ENCODE measurements at regions of chr17 and their contacts with region 1.

Region 1: GRCh38 chr17:3935140-3935542 is 18.9 kb upstream of the P2RX1 start:
- DNase-seq: peak; percentile 84 to 87
- ATAC-seq: peak; percentile 96 to 98
- H3K4me3 ChIP-seq: no peak overlapping the region
- H3K27ac ChIP-seq: no peak overlapping the region
- H3K4me1 ChIP-seq: no peaks in the 10 kb centered on the region; the same call in 2 of the 3 replicates
- CTCF ChIP-seq: peak; percentile 70
- EP300 ChIP-seq: no peak
- POLR2A ChIP-seq: no peak
- RAD21 ChIP-seq: peak; percentile 79 to 90

Region 2: GRCh38 chr17:3818786-3819185 is 116.4 kb before region 1 on chr17:
- CTCF ChIA-PET with region 1: no interaction called
- POLR2A ChIA-PET with region 1: no interaction called
- DNase-seq: no peak
- ATAC-seq: no peak
- H3K4me3 ChIP-seq: no peak overlapping the region
- H3K27ac ChIP-seq: no peak overlapping the region
- H3K4me1 ChIP-seq: no peaks in the 10 kb centered on the region
- CTCF ChIP-seq: no peak
- EP300 ChIP-seq: no peak
- POLR2A ChIP-seq: no peak
- RAD21 ChIP-seq: no peak

Region 3: GRCh38 chr17:3907483-3908216 is 27.5 kb before region 1 on chr17:
- CTCF ChIA-PET with region 1: interaction called, 43 read pairs
- POLR2A ChIA-PET with region 1: no interaction called
- DNase-seq: peak in 1 of 2 experiments; percentile 40
- ATAC-seq: peak; percentile 37 to 48; a peak in 4 of 6 replicates
- H3K4me3 ChIP-seq: no peak overlapping the region
- H3K27ac ChIP-seq: no peak overlapping the region
- H3K4me1 ChIP-seq: no peaks in the 10 kb centered on the region
- CTCF ChIP-seq: peak; percentile 52
- EP300 ChIP-seq: no peak
- POLR2A ChIP-seq: no peak
- RAD21 ChIP-seq: peak; percentile 72 to 83

Region 4: DNA sequence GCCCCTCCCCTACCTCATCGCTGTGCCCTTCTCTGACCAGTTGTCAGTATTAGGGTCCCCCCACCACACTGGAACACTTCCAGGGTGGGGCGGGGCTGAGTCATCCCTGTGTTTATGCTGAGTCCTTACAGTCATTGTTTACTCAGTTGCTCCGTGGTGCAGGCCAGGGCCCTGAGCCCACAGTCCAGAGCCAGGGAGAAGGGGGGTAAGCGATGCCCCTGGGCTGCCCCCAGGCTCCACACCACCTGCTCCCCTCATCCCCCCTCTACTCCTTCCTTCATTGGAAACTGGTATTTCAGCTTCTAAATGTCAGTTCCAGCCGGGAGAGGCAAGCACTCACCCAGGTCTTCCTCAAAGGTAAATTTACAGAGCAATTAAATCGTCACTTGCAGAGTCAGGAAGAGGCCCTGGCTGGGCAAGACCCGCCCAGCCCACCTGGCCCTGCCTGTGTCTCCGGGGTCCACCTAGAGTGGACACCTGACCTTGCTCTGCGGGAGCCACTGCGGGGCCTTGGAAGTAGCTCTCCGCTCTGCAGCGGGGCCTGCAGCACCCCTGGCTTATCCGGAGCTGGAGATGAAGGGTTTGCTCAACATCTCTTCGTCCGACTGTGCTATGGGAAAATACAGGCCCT is 24.3 kb after region 1 on chr17:
- CTCF ChIA-PET with region 1: interaction called, 10 read pairs
- POLR2A ChIA-PET with region 1: no interaction called
- DNase-seq: peak; percentile 76 to 94
- ATAC-seq: peak; percentile 54 to 85; a peak in 5 of 6 replicates
- H3K4me3 ChIP-seq: no peak overlapping the region
- H3K27ac ChIP-seq: peak overlapping the region; percentile 46 to 72
- H3K4me1 ChIP-seq: peaks cover 32% of the 10 kb centered on the region
- CTCF ChIP-seq: no peak
- EP300 ChIP-seq: no peak
- POLR2A ChIP-seq: no peak
- RAD21 ChIP-seq: no peak

Region 5: GRCh38 chr17:4043862-4044261 is 108.7 kb after region 1 on chr17:
- CTCF ChIA-PET with region 1: interaction called, 10 read pairs
- POLR2A ChIA-PET with region 1: no interaction called
- DNase-seq: no peak
- ATAC-seq: no peak
- H3K4me3 ChIP-seq: no peak overlapping the region
- H3K27ac ChIP-seq: no peak overlapping the region
- H3K4me1 ChIP-seq: no peaks in the 10 kb centered on the region
- CTCF ChIP-seq: no peak
- EP300 ChIP-seq: no peak
- POLR2A ChIP-seq: no peak
- RAD21 ChIP-seq: no peak

Measured in A549 (cell line).